ENCODE measurements at regions of chr12 and their contacts with region 1.

Region 1: DNA sequence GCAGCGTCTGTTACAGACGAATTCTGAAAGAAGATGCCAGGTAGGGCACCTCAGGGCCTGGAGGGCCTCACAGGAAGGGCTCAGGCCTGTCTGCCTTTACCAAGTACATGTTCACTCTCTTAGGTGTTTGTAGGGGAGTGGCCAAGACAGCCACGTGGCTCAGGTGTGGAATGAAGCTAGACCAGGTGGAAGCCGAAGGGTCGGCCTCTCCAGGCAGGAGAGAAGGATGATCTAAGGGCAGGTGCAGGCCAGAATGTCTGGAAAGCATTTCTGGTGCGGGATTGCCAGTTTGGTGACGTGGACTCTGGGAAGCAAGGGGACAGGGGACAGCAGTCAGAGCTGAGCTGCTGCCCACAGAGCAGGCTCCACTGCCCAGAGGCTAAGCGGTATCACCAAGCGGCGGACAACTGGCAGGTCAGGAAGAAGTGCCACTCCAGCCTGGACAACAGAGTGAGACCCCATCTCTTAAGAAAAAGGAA is 32.0 kb upstream of the MMP17 start:
- DNase-seq: peak; percentile 47
- ATAC-seq: peak; percentile 41
- H3K4me3 Mint-ChIP-seq: peak overlapping the region; percentile 24
- H3K27ac Mint-ChIP-seq: peak overlapping the region; percentile 93
- H3K4me1 Mint-ChIP-seq: peaks cover 38% of the 10 kb centered on the region
- H3K27me3 Mint-ChIP-seq: no peaks in the 10 kb centered on the region; the same call in 1 of the 2 replicates
- CTCF ChIP-seq: no peak

Region 2: DNA sequence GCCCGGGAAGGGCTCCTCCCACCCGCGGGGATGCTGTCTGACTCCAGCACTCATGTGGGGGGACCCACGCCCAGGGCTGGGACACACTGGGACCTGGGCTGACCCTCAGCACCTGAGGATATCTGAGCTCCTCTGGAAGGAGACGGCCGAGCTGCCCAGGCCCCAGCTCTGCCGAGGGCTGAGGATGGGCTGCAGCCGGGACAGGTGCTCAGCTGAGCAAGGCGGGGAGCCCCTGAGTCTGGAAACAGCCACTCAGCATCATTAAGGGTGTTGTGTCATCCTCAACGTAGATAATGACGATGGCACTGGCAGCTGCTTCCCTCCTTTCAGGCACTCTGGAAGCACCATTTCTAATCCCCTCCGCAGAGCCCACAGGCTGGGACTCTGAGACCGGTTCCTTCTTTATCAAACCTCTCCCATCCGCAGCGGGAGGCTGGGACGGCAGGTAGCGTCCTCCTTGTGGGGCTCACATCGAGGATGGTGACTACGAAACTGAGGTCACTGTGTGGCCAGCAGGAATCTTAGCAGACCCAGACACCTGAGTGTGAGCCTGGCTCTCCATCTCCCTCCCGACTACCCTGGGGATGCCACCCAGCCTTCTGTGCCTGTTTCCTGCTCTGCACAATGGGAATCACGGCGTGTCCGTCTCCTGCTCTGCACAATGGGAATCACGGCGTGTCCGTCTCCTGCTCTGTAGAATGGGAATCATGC is 112.0 kb before region 1 on chr12:
- CTCF ChIA-PET with region 1: no interaction called
- POLR2A ChIA-PET with region 1: no interaction called
- DNase-seq: no peak
- ATAC-seq: no peak
- H3K4me3 Mint-ChIP-seq: no peak overlapping the region
- H3K27ac Mint-ChIP-seq: no peak overlapping the region
- H3K4me1 Mint-ChIP-seq: peaks cover 25% of the 10 kb centered on the region
- H3K27me3 Mint-ChIP-seq: peaks cover 6% of the 10 kb centered on the region; the same call in 1 of the 2 replicates
- CTCF ChIP-seq: no peak

Region 3: GRCh38 chr12:131773582-131774221 is 22.5 kb before region 1 on chr12:
- CTCF ChIA-PET with region 1: interaction called, 10 read pairs
- POLR2A ChIA-PET with region 1: interaction called, 4 read pairs
- DNase-seq: peak; percentile 43
- ATAC-seq: peak; percentile 88
- H3K4me3 Mint-ChIP-seq: peak overlapping the region; percentile 21; the same call in 1 of the 2 replicates
- H3K27ac Mint-ChIP-seq: peak overlapping the region; percentile 91
- H3K4me1 Mint-ChIP-seq: peaks cover 50% of the 10 kb centered on the region
- H3K27me3 Mint-ChIP-seq: no peaks in the 10 kb centered on the region
- CTCF ChIP-seq: no peak

Region 4: GRCh38 chr12:131830335-131830913 is 34.2 kb after region 1 on chr12:
- CTCF ChIA-PET with region 1: interaction called, 12 read pairs
- POLR2A ChIA-PET with region 1: interaction called, 3 read pairs
- DNase-seq: peak; percentile 67
- ATAC-seq: peak; percentile 10
- H3K4me3 Mint-ChIP-seq: peak overlapping the region; percentile 67
- H3K27ac Mint-ChIP-seq: no peak overlapping the region
- H3K4me1 Mint-ChIP-seq: peaks cover 22% of the 10 kb centered on the region
- H3K27me3 Mint-ChIP-seq: peaks cover 19% of the 10 kb centered on the region
- CTCF ChIP-seq: no peak

Region 5: DNA sequence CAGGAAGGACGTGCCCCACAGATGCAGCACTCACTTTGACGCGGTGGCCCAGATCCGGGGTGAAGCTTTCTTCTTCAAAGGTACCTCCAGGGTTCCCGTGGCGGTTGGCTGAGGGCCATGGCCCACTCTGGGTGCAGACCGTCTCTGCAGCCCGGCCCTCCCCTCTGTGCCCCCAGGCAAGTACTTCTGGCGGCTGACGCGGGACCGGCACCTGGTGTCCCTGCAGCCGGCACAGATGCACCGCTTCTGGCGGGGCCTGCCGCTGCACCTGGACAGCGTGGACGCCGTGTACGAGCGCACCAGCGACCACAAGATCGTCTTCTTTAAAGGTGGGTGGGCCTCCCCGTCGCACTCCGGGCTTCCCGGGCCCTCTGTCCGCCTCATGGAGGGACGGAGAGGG is 48.9 kb after region 1 on chr12:
- CTCF ChIA-PET with region 1: no interaction called
- POLR2A ChIA-PET with region 1: no interaction called
- DNase-seq: no peak
- ATAC-seq: no peak
- H3K4me3 Mint-ChIP-seq: no peak overlapping the region
- H3K27ac Mint-ChIP-seq: no peak overlapping the region
- H3K4me1 Mint-ChIP-seq: no peaks in the 10 kb centered on the region
- H3K27me3 Mint-ChIP-seq: no peaks in the 10 kb centered on the region
- CTCF ChIP-seq: no peak

Region 6: DNA sequence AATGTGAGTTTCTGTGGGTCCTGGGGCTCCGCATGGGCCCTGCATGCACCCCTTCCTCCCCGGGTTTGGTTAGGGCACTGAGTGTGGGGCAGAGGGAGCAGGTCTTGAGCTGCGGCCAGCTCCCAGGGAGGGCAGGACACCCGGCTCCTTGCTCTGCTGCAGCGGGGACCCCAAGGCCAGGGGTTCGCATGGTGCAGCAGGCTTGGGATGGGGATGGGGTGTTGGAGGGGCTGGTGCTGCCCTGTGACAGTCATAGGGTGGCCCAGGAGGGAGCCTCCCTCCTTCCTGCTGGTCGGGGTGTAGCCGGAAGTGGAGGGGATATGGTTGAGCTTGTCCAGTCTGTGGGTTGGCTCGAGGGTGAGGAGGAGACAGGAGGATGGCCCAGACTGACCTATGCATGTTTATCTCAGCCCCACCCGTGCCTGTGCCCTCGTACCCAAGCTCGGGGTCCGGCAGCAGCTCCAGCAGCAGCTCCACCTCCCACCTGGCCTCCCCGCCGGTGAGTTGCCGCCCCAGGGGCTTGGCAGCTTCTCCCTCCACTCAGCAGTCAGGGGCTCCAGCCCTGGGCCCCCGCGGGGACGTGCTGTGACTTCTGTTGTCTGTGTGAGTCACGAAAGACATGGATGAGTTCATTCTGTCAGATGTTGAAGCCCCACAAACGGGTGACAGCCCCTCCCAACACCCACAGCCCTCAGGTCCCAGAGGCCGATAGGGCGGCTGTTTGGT is 114.3 kb after region 1 on chr12:
- CTCF ChIA-PET with region 1: no interaction called
- POLR2A ChIA-PET with region 1: no interaction called
- DNase-seq: no peak
- ATAC-seq: no peak
- H3K4me3 Mint-ChIP-seq: no peak overlapping the region
- H3K27ac Mint-ChIP-seq: no peak overlapping the region
- H3K4me1 Mint-ChIP-seq: no peaks in the 10 kb centered on the region
- H3K27me3 Mint-ChIP-seq: no peaks in the 10 kb centered on the region
- CTCF ChIP-seq: no peak

Measured in WTC11 (cell line).